GM12878 (cell line): ENCODE measurements at regions of chr12 and their contacts with region 1.

Region 1: DNA sequence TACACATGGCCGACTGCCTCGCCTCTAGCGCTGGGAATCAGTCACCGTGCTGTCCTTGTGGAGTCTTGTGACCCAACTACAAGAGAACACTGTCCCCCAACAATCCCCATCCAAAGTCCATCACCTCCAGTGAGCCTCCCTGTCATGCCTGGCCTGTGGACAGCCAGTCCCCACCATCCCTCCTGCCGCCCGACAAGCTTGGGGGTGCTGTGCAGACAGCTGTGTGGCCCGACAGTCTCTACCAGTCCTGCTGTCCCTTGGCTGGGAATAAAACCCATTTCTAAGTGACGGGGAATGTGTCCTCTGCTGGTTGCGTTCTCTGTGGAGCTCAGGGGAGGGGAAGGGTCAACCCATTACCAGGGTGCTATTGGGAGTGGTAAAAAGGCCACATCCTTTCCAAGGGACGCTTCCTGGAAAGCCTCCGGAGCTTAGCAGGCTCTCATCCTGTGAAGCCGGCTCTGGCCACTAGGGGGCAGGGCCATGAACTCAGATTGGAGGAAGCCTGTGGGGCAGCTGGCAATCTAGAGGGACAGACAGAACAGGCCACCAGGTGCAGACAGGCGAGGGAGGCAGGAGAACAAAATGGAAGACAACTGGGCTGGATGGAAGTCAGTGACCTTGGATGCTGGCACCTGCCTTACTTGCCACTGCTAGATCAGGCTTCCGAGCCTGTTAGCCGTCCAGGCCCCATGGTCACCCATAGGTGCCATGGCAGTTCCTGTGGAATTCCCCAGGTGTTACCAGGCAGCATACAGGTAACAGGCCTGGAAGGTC is 12.0 kb upstream of the BLTP3B start:
- DNase-seq: no peak
- ATAC-seq: peak; percentile 91
- H3K4me3 ChIP-seq: no peak overlapping the region
- H3K27ac ChIP-seq: no peak overlapping the region
- H3K4me1 ChIP-seq: 0 out of 2 replicates have a peak, but pooled peaks cover 3% of the 10 kb centered on the region
- H3K27me3 ChIP-seq: no peaks in the 10 kb centered on the region
- CTCF ChIP-seq: peak; percentile 63 to 94 (median 91)
- EP300 ChIP-seq: no peak
- POLR2A ChIP-seq: no peak
- RAD21 ChIP-seq: peak; percentile 56

Region 2: GRCh38 chr12:100170313-100170858 is 15.7 kb after region 1 on chr12:
- CTCF ChIA-PET with region 1: interaction called, 47 read pairs
- POLR2A ChIA-PET with region 1: no interaction called
- RAD21 ChIA-PET with region 1: no interaction called
- SMC1A ChIA-PET with region 1: interaction called, 3 read pairs
- in situ Hi-C with region 1: no loop called
- intact Hi-C with region 1: no loop called
- DNase-seq: no peak
- ATAC-seq: no peak
- H3K4me3 ChIP-seq: no peak overlapping the region
- H3K27ac ChIP-seq: no peak overlapping the region
- H3K4me1 ChIP-seq: no peaks in the 10 kb centered on the region
- H3K27me3 ChIP-seq: no peaks in the 10 kb centered on the region
- CTCF ChIP-seq: no peak
- EP300 ChIP-seq: no peak
- POLR2A ChIP-seq: no peak
- RAD21 ChIP-seq: no peak

Region 3: GRCh38 chr12:100185361-100185894 is 30.8 kb after region 1 on chr12:
- CTCF ChIA-PET with region 1: interaction called, 11 read pairs
- POLR2A ChIA-PET with region 1: interaction called, 4 read pairs
- RAD21 ChIA-PET with region 1: no interaction called
- SMC1A ChIA-PET with region 1: interaction called, 3 read pairs
- in situ Hi-C with region 1: no loop called
- intact Hi-C with region 1: no loop called
- DNase-seq: peak; percentile 54
- ATAC-seq: peak; percentile 92
- H3K4me3 ChIP-seq: no peak overlapping the region
- H3K27ac ChIP-seq: peak overlapping the region; percentile 52
- H3K4me1 ChIP-seq: peaks cover 21% of the 10 kb centered on the region
- H3K27me3 ChIP-seq: no peaks in the 10 kb centered on the region
- CTCF ChIP-seq: no peak
- EP300 ChIP-seq: no peak
- POLR2A ChIP-seq: no peak
- RAD21 ChIP-seq: no peak

Region 4: DNA sequence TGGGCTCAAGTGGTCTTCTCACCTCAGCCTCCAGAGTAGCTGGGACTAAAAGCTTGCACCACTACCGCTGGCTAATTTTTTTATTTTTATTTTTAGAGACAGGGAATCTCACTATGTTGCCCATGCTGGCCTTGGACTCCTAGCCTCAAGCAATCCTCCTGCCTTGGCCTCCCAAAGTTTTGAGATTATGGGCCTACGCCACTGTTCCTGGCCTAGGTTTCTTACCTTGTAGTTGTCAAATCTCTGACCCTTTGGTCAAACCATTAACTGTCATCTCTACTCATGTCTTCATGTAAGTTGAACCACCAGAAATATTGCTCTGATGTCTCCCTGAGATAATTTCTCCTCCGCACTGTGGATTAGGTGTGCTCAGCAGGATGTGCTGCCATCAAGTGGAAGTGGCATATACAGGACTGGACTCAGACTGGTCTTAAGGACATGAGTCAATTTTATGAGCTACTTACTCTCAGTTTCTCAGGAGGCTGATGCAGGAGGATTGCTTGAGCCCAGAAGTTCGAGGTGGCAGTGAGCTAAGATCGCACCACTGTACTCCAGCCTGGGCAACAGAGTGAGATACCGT is 74.5 kb after region 1 on chr12:
- CTCF ChIA-PET with region 1: interaction called, 14 read pairs
- POLR2A ChIA-PET with region 1: no interaction called
- RAD21 ChIA-PET with region 1: no interaction called
- SMC1A ChIA-PET with region 1: interaction called, 3 read pairs
- in situ Hi-C with region 1: no loop called
- intact Hi-C with region 1: no loop called
- DNase-seq: peak; percentile 1
- ATAC-seq: peak; percentile 57
- H3K4me3 ChIP-seq: no peak overlapping the region
- H3K27ac ChIP-seq: no peak overlapping the region
- H3K4me1 ChIP-seq: no peaks in the 10 kb centered on the region
- H3K27me3 ChIP-seq: no peaks in the 10 kb centered on the region
- CTCF ChIP-seq: peak in 2 of 3 experiments; percentile 19 to 20; a peak in 2 of 6 replicates
- EP300 ChIP-seq: no peak
- POLR2A ChIP-seq: no peak
- RAD21 ChIP-seq: peak; percentile 23; the same call in 1 of the 2 replicates